OCI-LY7 (cell line): ENCODE measurements at regions of chr9 and their contacts with region 1.

Region 1: DNA sequence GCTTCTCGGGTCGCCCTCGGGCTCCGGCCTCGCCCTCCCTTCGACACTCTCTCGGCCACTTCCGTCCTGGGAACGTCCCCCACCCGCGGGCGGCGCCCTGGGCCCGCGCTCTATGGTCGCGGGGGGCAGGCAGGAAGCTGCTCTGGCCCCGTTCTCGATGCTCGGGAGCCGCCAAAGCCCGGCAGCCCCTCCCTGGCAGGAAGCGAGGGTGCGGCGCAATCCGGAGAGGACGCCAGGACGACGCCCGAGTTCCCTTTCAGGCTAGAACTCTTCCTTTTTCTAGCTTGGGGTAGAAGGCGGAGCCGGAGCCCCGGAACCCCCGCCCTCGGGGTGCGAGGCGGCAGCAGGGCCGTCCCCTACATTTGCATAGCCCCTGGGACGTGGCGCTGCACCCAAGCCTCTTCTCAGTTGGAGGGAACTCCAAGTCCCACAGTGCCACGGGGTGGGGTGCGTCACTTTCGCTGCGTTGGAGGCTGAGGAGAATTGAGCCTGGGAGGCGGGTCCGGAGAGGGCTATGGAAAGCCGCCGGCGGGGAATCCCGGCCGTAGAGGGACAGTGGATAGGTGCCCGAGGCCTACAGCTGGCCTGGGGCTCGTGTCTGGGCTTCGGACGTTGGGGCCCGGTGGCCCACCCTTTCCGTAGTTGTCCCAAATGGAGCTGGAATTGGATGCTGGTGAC is at the starts of genes CREB3 and TLN1:
- DNase-seq: peak; percentile 99
- H3K4me3 ChIP-seq: peak within 1 kb of the TSS; percentile 89
- H3K27ac ChIP-seq: peak within 1 kb of the TSS; percentile 77
- H3K4me1 ChIP-seq: peaks cover 56% of the 10 kb centered on the region
- CTCF ChIP-seq: peak; percentile 65
- total RNA-seq, gene CREB3: 16.8 and 18.2 TPM in 2 replicates
- total RNA-seq, gene TLN1: 87.5 and 98.8 TPM in 2 replicates

Region 2: DNA sequence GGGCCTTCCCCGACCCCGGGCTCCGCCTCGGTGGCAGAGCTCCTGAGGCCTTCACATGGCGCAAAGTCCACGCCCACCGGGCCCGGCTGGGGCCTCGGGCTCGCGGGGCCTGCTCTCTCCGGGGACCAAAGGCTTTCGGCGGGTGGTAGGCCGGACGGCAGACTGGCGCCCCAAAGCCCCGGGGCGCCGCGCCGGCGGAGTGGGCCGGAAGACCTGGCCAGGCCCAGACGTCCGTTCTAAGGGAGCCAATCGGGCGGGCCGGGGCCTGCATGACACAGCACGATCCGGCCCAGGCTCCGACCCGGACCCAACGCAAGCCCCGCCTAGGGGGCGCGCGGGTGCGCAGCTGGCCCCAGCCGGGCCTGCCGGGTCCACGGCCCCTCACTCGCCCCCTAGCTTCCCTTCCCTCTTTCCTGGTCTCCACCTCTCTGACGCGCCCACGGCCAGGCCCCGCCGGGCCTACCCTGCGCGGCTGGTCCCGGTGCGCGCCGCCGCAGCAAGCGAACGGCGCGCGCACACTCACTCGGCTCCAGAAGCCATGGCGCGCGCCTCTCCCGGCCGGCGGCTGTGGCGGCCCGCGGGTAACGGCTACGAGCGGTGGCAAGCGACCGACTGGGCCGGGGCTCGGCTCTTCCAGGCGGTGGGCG is 660.3 kb before region 1 on chr9:
- CTCF ChIA-PET with region 1: no interaction called
- POLR2A ChIA-PET with region 1: no interaction called
- intact Hi-C with region 1: loop called (anchors 10 kb)
- DNase-seq: peak; percentile 87
- H3K4me3 ChIP-seq: peak overlapping the region; percentile 92
- H3K27ac ChIP-seq: peak overlapping the region; percentile 92
- H3K4me1 ChIP-seq: peaks cover 33% of the 10 kb centered on the region
- CTCF ChIP-seq: peak; percentile 64

Region 3: DNA sequence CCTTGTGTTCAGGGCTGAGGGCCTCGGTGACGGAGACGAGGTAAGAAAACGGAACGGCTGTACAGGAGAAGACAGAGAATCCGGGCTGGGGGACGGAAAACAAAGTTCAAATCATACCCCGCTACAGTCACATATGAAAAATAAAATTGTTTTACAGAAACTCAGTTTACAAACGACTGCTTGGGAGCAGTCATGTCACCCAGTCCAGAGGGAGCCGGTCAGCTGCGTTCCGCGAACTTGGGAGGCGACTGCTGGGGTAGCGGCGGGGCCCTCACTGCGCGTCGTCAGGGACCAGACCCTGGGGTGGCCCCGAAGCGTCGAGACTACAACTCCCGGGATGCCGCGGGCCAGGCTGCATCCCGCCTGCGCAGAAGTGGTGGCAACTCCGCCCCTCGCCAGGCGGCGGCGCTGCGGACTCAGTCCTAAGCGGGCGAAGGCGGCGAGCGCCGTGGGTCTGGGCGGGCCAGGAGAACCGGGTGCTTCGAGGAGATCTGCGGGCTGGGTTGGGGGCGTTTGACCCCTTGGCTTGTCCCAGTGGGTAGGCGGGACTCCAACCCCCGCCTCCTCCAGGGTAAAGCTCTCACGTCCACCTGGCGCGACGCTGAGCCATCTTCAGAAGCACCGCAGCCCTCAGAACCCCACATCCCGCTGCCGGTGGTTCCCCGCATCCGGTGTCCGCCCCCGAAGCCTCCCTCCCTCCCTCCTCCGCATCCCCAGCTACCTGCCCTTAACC is 85.6 kb before region 1 on chr9:
- CTCF ChIA-PET with region 1: interaction called, 4 read pairs
- POLR2A ChIA-PET with region 1: interaction called, 6 read pairs
- intact Hi-C with region 1: loop called (anchors 2 kb)
- DNase-seq: peak; percentile 93
- H3K4me3 ChIP-seq: peak overlapping the region; percentile 92
- H3K27ac ChIP-seq: peak overlapping the region; percentile 89
- H3K4me1 ChIP-seq: peaks cover 46% of the 10 kb centered on the region
- CTCF ChIP-seq: peak; percentile 83

Region 4: DNA sequence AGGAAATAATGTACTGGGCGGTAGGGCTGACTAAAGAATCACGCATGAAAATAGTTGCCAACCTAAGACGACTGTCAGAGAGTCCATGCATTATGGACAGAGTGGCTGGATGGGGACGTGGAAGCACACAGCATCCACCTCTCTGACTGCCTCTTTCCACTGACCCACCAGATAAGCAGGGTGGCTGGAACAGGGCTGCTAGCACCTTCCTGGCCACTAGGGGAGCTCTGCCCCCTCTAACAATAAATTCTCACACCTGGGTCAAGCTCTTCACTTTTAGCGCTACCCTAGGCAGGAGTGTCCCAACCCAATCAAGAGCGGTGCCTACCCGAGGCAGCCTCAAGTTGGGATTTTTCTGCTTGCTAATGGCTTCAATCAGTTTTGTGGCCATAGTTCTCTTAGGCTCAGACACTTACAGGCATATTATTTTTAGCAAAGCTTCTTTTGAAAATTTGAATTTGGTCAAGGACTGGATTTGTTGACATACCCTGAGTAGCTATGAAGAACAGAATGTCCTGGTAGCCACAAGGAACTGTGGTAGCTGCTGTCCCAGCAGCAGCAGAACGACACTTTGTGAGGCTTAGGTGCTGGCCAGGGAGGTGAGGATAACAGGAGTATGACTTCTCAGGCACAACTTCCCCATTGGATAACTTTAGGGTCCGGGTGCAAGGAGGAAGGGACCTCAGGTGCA is 35.6 kb before region 1 on chr9:
- CTCF ChIA-PET with region 1: interaction called, 10 read pairs
- POLR2A ChIA-PET with region 1: interaction called, 5 read pairs
- intact Hi-C with region 1: no loop called
- DNase-seq: peak; percentile 77
- H3K4me3 ChIP-seq: no peak overlapping the region
- H3K27ac ChIP-seq: no peak overlapping the region
- H3K4me1 ChIP-seq: no peaks in the 10 kb centered on the region
- CTCF ChIP-seq: peak; percentile 97

Region 5: GRCh38 chr9:35790385-35791296 is 58.4 kb after region 1 on chr9:
- CTCF ChIA-PET with region 1: interaction called, 4 read pairs
- POLR2A ChIA-PET with region 1: interaction called, 3 read pairs
- intact Hi-C with region 1: loop called (anchors 1 kb)
- DNase-seq: peak; percentile 73
- H3K4me3 ChIP-seq: no peak overlapping the region
- H3K27ac ChIP-seq: no peak overlapping the region
- H3K4me1 ChIP-seq: peaks cover 12% of the 10 kb centered on the region
- CTCF ChIP-seq: peak; percentile 95

Region 6: GRCh38 chr9:35882263-35882848 is 150.1 kb after region 1 on chr9:
- CTCF ChIA-PET with region 1: no interaction called
- POLR2A ChIA-PET with region 1: no interaction called
- intact Hi-C with region 1: loop called (anchors 5 kb)
- DNase-seq: peak; percentile 76
- H3K4me3 ChIP-seq: no peak overlapping the region
- H3K27ac ChIP-seq: no peak overlapping the region
- H3K4me1 ChIP-seq: no peaks in the 10 kb centered on the region
- CTCF ChIP-seq: peak; percentile 100

Region 7: GRCh38 chr9:35935755-35936509 is 203.7 kb after region 1 on chr9:
- CTCF ChIA-PET with region 1: no interaction called
- POLR2A ChIA-PET with region 1: no interaction called
- intact Hi-C with region 1: no loop called
- DNase-seq: no peak
- H3K4me3 ChIP-seq: no peak overlapping the region
- H3K27ac ChIP-seq: no peak overlapping the region
- H3K4me1 ChIP-seq: peaks cover 41% of the 10 kb centered on the region
- CTCF ChIP-seq: no peak